SK-N-SH (cell line): ENCODE measurements at regions of chr2 and their contacts with region 1.

Region 1: GRCh38 chr2:240851078-240851991 is 17.3 kb upstream of the AGXT start:
- DNase-seq: peak; percentile 93
- H3K4me3 ChIP-seq: no peak overlapping the region; a peak in 1 of 4 replicates
- H3K27ac ChIP-seq: no peak overlapping the region
- H3K4me1 ChIP-seq: no peaks in the 10 kb centered on the region
- H3K27me3 ChIP-seq: no peaks in the 10 kb centered on the region
- CTCF ChIP-seq: peak; percentile 83
- EP300 ChIP-seq: no peak
- RAD21 ChIP-seq: peak; percentile 96

Region 2: GRCh38 chr2:240832205-240832727 is 19.1 kb before region 1 on chr2:
- CTCF ChIA-PET with region 1: interaction called, 71 read pairs
- POLR2A ChIA-PET with region 1: no interaction called
- DNase-seq: peak; percentile 98
- H3K4me3 ChIP-seq: peak overlapping the region; percentile 35 to 51; a peak in 3 of 4 replicates
- H3K27ac ChIP-seq: peak overlapping the region in 1 of 2 experiments; percentile 29; a peak in 1 of 4 replicates
- H3K4me1 ChIP-seq: peaks cover 0 to 32% of the 10 kb centered on the region in 2 experiments; a peak in 1 of 4 replicates
- H3K27me3 ChIP-seq: no peaks in the 10 kb centered on the region; the same call in 1 of the 2 replicates
- CTCF ChIP-seq: no peak
- EP300 ChIP-seq: no peak
- RAD21 ChIP-seq: no peak

Region 3: GRCh38 chr2:240861554-240861953 is 10.2 kb after region 1 on chr2:
- CTCF ChIA-PET with region 1: interaction called, 44 read pairs
- POLR2A ChIA-PET with region 1: no interaction called
- DNase-seq: no peak
- H3K4me3 ChIP-seq: no peak overlapping the region
- H3K27ac ChIP-seq: no peak overlapping the region
- H3K4me1 ChIP-seq: no peaks in the 10 kb centered on the region
- H3K27me3 ChIP-seq: peaks cover 19% of the 10 kb centered on the region
- CTCF ChIP-seq: no peak
- EP300 ChIP-seq: no peak
- RAD21 ChIP-seq: no peak

Region 4: GRCh38 chr2:240881913-240882312 is 30.6 kb after region 1 on chr2:
- CTCF ChIA-PET with region 1: interaction called, 14 read pairs
- POLR2A ChIA-PET with region 1: no interaction called
- DNase-seq: no peak
- H3K4me3 ChIP-seq: no peak overlapping the region
- H3K27ac ChIP-seq: no peak overlapping the region
- H3K4me1 ChIP-seq: no peaks in the 10 kb centered on the region; a peak in 1 of 4 replicates
- H3K27me3 ChIP-seq: no peaks in the 10 kb centered on the region
- CTCF ChIP-seq: no peak
- EP300 ChIP-seq: no peak
- RAD21 ChIP-seq: no peak

Region 5: GRCh38 chr2:240902615-240903041 is 51.3 kb after region 1 on chr2:
- CTCF ChIA-PET with region 1: interaction called, 29 read pairs
- POLR2A ChIA-PET with region 1: no interaction called
- DNase-seq: peak; percentile 80
- H3K4me3 ChIP-seq: no peak overlapping the region
- H3K27ac ChIP-seq: peak overlapping the region in 1 of 2 experiments; percentile 4; a peak in 2 of 4 replicates
- H3K4me1 ChIP-seq: peaks cover 0 to 64% of the 10 kb centered on the region in 2 experiments; a peak in 1 of 4 replicates
- H3K27me3 ChIP-seq: peaks cover 5% of the 10 kb centered on the region; the same call in 1 of the 2 replicates
- CTCF ChIP-seq: no peak
- EP300 ChIP-seq: peak in 1 of 2 experiments; percentile 26; a peak in 1 of 4 replicates
- RAD21 ChIP-seq: no peak

Region 6: DNA sequence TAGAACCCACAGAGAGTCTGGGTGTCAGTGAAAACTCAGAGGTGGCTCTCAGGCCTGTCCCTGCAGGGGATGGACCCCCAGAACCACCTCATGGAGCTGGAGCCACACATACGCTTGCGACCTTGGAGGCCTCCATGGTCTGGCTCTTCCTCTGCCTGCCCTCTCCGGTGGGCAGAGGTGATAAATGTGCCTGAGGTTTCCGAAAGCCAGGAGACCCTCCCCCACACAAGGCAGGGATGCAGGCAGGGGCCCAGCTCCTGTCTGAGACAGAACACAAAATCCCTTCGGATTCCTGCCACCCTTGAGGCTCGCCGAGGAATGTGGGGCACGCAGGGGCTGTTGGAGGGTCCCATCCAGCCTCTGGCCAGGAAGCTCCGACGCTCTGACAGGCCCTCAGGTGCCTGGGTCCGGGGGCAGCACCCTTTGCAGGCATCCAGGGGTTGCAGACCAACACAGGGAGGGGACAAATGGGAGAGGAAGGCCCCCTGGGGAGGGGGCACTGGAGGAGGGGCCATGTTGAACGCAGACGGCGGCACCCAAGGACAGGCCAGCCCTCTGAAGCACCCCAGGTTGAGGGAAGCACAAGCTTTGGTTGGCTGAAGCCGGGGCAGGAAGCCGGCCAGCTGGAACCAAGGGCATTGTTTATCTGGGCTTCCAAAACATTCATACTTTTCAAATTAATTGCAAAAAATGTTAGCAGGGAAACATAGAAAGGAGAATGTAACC is 143.0 kb after region 1 on chr2:
- CTCF ChIA-PET with region 1: interaction called, 10 read pairs
- POLR2A ChIA-PET with region 1: no interaction called
- DNase-seq: no peak
- H3K4me3 ChIP-seq: no peak overlapping the region
- H3K27ac ChIP-seq: no peak overlapping the region
- H3K4me1 ChIP-seq: peaks cover 0 to 3% of the 10 kb centered on the region in 2 experiments; a peak in 1 of 4 replicates
- H3K27me3 ChIP-seq: no peaks in the 10 kb centered on the region
- CTCF ChIP-seq: no peak
- EP300 ChIP-seq: no peak
- RAD21 ChIP-seq: no peak

Region 7: DNA sequence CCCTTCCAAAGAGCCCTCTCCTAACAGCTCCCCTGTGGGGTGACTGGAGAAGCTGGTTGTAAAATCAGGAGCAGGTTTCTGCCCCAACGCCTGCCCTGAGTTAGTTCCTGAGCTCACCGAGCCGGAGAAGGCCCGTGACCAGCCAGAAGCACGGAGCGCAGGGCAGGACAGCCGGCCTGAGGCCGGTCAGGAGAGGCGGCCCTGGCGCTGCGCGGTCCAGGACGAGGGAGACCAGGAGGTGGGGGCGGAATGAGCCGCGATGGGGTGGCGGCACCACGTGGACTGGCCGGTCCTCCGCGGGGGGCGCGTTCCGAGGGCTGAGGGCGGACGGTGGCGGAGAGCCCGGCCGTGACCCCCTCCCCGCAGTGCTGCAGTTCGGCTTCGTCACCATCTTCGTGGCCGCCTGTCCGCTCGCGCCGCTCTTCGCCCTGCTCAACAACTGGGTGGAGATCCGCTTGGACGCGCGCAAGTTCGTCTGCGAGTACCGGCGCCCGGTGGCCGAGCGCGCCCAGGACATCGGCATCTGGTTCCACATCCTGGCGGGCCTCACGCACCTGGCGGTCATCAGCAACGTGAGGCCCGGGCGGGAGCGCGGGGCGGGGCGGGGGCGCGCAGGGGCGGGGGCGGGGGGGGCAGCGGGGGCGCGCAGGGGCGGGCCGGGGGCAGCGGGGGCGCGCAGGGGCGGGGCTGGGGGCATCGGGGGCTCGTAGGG is 366.1 kb after region 1 on chr2:
- CTCF ChIA-PET with region 1: interaction called, 10 read pairs
- POLR2A ChIA-PET with region 1: no interaction called
- DNase-seq: peak; percentile 97
- H3K4me3 ChIP-seq: peak overlapping the region; percentile 45 to 47
- H3K27ac ChIP-seq: peak overlapping the region; percentile 67 to 75
- H3K4me1 ChIP-seq: peaks cover 2 to 6% of the 10 kb centered on the region in 2 experiments; a peak in 2 of 4 replicates
- H3K27me3 ChIP-seq: no peaks in the 10 kb centered on the region
- CTCF ChIP-seq: no peak
- EP300 ChIP-seq: no peak
- RAD21 ChIP-seq: no peak